CD8-positive, alpha-beta T cell (primary cell): ENCODE measurements at regions of chr4 and their contacts with region 1.

Region 1: GRCh38 chr4:15001869-15002658 is at the start of gene CPEB2:
- DNase-seq: peak; percentile 84 to 97 (median 91)
- ATAC-seq: peak; percentile 70
- H3K4me3 ChIP-seq: peak within 1 kb of the TSS; percentile 77 to 97
- H3K4me3 Mint-ChIP-seq: peak within 1 kb of the TSS; percentile 93
- H3K27ac ChIP-seq: peak within 1 kb of the TSS; percentile 100
- H3K27ac Mint-ChIP-seq: peak within 1 kb of the TSS; percentile 98
- H3K4me1 ChIP-seq: peaks cover 11% of the 10 kb centered on the region
- H3K4me1 Mint-ChIP-seq: peaks cover 26% of the 10 kb centered on the region
- H3K27me3 ChIP-seq: no peaks in the 10 kb centered on the region
- H3K27me3 Mint-ChIP-seq: no peaks in the 10 kb centered on the region
- CTCF ChIP-seq: no peak
- total RNA-seq, gene CPEB2: 17.7 to 21.8 TPM

Region 2: DNA sequence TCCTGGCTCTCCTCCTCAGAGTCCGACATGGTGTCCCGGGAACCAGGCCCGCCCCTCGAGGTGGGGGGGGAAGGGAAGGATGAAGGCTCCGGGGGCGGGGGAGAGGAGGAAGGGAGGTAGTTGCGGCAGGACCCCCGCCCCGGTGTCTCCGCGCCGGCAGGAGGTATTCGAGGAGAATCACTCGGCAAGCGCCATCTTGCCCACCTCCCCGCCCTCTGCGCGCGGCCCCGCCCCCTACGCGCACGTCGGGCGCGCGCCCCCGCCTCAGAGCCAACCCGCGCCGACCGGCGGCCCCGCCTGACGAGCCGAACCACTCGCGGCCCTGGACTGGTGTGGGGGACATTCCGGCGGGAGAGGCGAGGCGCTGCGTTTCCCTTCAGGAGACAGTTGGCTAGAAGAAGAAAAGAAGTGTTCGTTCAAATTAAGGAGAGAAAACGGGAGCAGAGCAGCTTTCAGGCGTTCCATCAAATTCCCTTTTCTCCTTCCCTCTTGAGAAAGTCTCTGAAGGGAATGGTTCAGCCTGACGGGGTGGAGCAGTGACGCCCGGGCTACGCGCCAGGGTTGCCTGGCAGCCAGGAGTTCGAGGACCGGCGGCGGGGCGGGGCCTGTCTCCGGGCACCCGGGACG is 1517.8 kb before region 1 on chr4 and contains the start of gene RAB28:
- CTCF ChIA-PET with region 1: no interaction called
- POLR2A ChIA-PET with region 1: no interaction called
- intact Hi-C with region 1: loop called (anchors 1 to 2 kb)
- DNase-seq: peak; percentile 86 to 96 (median 93)
- ATAC-seq: peak; percentile 88
- H3K4me3 ChIP-seq: peak within 1 kb of the TSS; percentile 84 to 96
- H3K4me3 Mint-ChIP-seq: peak within 1 kb of the TSS; percentile 84
- H3K27ac ChIP-seq: peak within 1 kb of the TSS; percentile 99
- H3K27ac Mint-ChIP-seq: peak within 1 kb of the TSS; percentile 100
- H3K4me1 ChIP-seq: peaks cover 15% of the 10 kb centered on the region
- H3K4me1 Mint-ChIP-seq: peaks cover 26% of the 10 kb centered on the region
- H3K27me3 ChIP-seq: no peaks in the 10 kb centered on the region
- H3K27me3 Mint-ChIP-seq: peaks cover 15% of the 10 kb centered on the region
- CTCF ChIP-seq: no peak
- total RNA-seq, gene RAB28: 4.2 to 4.6 TPM

Region 3: DNA sequence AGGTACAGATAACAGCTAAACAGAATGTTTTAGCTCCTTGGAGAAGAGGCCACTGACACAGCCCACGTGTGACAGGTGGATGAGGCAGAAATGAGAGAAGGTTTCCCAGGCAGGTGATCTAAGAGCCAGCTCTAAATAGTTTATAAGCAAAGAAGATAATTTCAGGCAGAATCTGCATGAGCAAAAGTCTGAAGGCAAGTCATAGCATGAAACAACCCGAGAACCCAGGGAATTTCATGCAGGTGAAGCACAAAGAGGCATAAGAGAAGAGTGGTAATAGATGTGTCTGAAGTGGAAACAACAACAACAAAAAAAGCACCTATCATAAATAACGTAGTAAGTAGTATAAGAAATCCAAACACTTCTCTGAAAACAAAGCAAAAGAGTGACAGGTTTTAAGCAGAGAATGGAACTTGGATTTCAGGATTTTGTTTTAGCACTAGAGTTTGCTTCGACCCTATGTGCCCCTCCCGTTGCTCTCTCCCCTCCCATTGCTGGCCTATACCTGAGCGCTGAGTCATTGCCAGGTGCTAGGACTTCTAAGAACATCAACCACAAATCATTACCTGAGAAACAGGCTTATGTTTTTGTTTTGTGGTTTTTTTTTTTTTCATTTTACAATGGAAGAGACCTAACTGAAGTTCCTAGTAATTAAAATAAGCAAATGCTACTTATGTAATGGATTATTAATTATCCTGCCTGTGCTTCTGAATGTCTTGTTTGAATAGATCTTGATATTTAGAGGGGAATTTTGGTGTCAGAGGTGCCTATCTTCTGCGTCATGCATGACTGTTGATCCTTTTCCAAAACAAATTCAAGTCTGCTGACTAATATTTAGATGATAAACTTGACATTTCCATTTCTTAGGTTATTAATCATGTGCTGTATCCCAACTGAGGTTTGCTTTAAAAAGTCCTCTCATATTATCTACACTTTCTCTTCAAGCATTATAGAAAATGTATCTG is 275.3 kb before region 1 on chr4:
- CTCF ChIA-PET with region 1: no interaction called
- POLR2A ChIA-PET with region 1: no interaction called
- intact Hi-C with region 1: no loop called
- DNase-seq: no peak
- ATAC-seq: no peak
- H3K4me3 ChIP-seq: no peak overlapping the region
- H3K4me3 Mint-ChIP-seq: no peak overlapping the region
- H3K27ac ChIP-seq: no peak overlapping the region
- H3K27ac Mint-ChIP-seq: no peak overlapping the region
- H3K4me1 ChIP-seq: no peaks in the 10 kb centered on the region
- H3K4me1 Mint-ChIP-seq: no peaks in the 10 kb centered on the region
- H3K27me3 ChIP-seq: no peaks in the 10 kb centered on the region
- H3K27me3 Mint-ChIP-seq: no peaks in the 10 kb centered on the region
- CTCF ChIP-seq: no peak

Region 4: DNA sequence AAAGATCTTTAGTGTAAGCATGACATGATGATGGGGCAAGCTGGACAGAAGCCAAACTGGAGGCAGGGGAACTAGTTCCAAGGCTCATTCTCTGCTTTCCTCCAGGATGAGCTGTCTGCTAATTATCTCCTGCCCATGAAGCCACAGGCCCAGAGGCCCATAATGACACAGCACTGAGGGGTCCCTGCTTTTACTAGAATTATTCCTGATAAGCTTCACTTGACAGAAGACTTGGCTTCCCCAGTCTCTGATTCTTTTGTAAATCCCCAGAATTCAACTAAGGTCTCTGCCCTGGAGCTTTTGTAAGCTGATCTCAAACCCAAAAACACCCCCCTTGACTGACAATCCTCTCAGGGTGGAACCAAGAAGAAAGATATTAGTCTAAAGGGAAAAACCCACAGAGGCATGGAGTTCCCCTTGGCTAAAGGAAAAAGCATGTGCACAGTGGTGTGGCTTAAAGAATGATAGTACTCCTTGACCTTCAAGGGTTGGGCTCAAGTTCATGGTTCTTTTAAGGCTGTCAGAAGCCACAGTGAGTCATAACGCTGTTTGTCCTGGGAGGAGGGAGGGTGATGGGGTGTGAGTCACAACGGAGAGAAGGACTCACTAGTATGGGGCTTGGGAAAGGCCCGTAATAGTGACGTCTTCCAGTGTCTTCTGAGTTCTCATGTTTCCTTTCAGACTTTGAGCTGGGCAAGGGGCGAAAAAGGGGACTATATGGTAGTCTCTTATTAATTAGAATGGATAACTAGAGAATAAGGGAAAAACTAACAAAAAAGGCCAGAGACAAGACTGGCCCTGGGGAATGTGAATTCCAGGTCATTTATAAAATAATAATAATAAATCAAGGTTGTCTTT is 145.8 kb before region 1 on chr4:
- CTCF ChIA-PET with region 1: no interaction called
- POLR2A ChIA-PET with region 1: no interaction called
- intact Hi-C with region 1: no loop called
- DNase-seq: peak in 2 of 9 experiments; percentile 9 to 41
- ATAC-seq: no peak
- H3K4me3 ChIP-seq: no peak overlapping the region
- H3K4me3 Mint-ChIP-seq: no peak overlapping the region
- H3K27ac ChIP-seq: no peak overlapping the region
- H3K27ac Mint-ChIP-seq: no peak overlapping the region
- H3K4me1 ChIP-seq: no peaks in the 10 kb centered on the region
- H3K4me1 Mint-ChIP-seq: no peaks in the 10 kb centered on the region
- H3K27me3 ChIP-seq: no peaks in the 10 kb centered on the region
- H3K27me3 Mint-ChIP-seq: peaks cover 32% of the 10 kb centered on the region
- CTCF ChIP-seq: no peak

Region 5: GRCh38 chr4:14871676-14872430 is 130.2 kb before region 1 on chr4:
- CTCF ChIA-PET with region 1: no interaction called
- POLR2A ChIA-PET with region 1: no interaction called
- intact Hi-C with region 1: loop called (anchors 2 to 5 kb)
- DNase-seq: peak in 5 of 9 experiments; percentile 27 to 44 (median 37)
- ATAC-seq: no peak
- H3K4me3 ChIP-seq: no peak overlapping the region
- H3K4me3 Mint-ChIP-seq: no peak overlapping the region
- H3K27ac ChIP-seq: no peak overlapping the region
- H3K27ac Mint-ChIP-seq: no peak overlapping the region
- H3K4me1 ChIP-seq: peaks cover 5% of the 10 kb centered on the region
- H3K4me1 Mint-ChIP-seq: peaks cover 12% of the 10 kb centered on the region
- H3K27me3 ChIP-seq: no peaks in the 10 kb centered on the region
- H3K27me3 Mint-ChIP-seq: peaks cover 16% of the 10 kb centered on the region
- CTCF ChIP-seq: no peak

Region 6: GRCh38 chr4:14990484-14990883 is 11.6 kb before region 1 on chr4:
- CTCF ChIA-PET with region 1: interaction called, 7 read pairs
- POLR2A ChIA-PET with region 1: interaction called, 3 read pairs
- intact Hi-C with region 1: loop called in 1 of 2 experiments (anchors 2 kb)
- DNase-seq: no peak
- ATAC-seq: no peak
- H3K4me3 ChIP-seq: no peak overlapping the region
- H3K4me3 Mint-ChIP-seq: no peak overlapping the region
- H3K27ac ChIP-seq: no peak overlapping the region
- H3K27ac Mint-ChIP-seq: no peak overlapping the region
- H3K4me1 ChIP-seq: no peaks in the 10 kb centered on the region
- H3K4me1 Mint-ChIP-seq: no peaks in the 10 kb centered on the region
- H3K27me3 ChIP-seq: no peaks in the 10 kb centered on the region
- H3K27me3 Mint-ChIP-seq: peaks cover 10% of the 10 kb centered on the region
- CTCF ChIP-seq: no peak

Region 7: DNA sequence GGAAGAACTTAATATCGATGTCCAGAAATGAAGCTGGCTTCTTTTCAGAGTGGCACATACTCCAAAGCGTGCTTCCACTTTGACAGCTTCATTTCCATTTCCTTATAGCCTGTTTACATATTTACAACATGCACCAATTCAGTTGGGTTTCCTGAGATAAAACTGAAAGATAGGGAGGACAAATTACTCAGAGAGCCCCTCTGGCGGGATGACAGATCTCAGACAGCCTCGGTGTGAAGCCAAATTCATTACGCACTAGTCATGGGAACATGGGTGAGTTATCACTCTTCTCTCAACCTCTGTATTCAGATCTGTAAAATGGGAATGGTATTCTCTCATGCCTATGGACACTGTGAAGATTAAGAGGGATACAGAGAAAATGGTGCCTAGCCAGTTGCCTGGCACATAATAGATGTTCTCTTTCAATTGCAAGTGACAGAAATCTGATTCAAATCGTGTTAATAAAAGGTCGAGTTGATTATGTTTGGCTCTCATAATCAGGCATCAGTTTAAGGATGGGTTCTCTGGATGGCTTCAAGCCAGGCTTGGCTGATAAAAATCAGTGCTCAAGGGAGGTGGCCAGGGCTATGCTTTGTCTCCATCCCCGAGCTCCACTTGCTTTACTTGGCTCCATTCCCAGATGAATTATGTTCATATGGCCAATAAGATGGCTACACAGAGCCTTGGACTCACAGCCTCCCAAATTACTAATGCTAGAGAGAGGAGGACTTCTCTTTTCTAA is 293.5 kb after region 1 on chr4:
- CTCF ChIA-PET with region 1: no interaction called
- POLR2A ChIA-PET with region 1: no interaction called
- intact Hi-C with region 1: no loop called
- DNase-seq: no peak
- ATAC-seq: no peak
- H3K4me3 ChIP-seq: no peak overlapping the region
- H3K4me3 Mint-ChIP-seq: no peak overlapping the region
- H3K27ac ChIP-seq: no peak overlapping the region
- H3K27ac Mint-ChIP-seq: no peak overlapping the region
- H3K4me1 ChIP-seq: no peaks in the 10 kb centered on the region
- H3K4me1 Mint-ChIP-seq: no peaks in the 10 kb centered on the region
- H3K27me3 ChIP-seq: no peaks in the 10 kb centered on the region
- H3K27me3 Mint-ChIP-seq: no peaks in the 10 kb centered on the region
- CTCF ChIP-seq: no peak

Region 8: DNA sequence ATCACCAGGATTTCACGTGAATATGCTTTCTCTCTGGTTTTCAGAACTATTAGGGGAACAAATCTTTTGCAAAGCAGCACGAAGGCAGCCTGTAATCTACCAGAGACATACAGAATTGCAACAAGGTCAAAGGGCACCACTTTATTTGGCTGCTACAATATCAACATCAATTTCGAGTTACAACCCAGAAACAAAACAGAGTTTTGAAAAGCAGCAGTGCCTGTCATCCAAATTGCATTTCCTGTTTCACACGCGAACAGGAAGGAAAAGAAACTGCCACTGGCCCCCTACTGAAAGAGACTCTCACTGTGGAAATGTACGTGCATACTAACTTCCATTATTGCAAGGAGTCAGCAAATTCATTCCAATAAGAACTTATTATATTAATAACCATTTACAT is 408.7 kb after region 1 on chr4:
- CTCF ChIA-PET with region 1: no interaction called
- POLR2A ChIA-PET with region 1: no interaction called
- intact Hi-C with region 1: loop called in 1 of 2 experiments (anchors 5 kb)
- DNase-seq: peak in 5 of 9 experiments; percentile 6 to 59 (median 28)
- ATAC-seq: peak; percentile 62
- H3K4me3 ChIP-seq: peak overlapping the region in 1 of 2 experiments; percentile 55
- H3K4me3 Mint-ChIP-seq: peak overlapping the region; percentile 79
- H3K27ac ChIP-seq: peak overlapping the region; percentile 42 to 56
- H3K27ac Mint-ChIP-seq: peak overlapping the region; percentile 90
- H3K4me1 ChIP-seq: peaks cover 42% of the 10 kb centered on the region
- H3K4me1 Mint-ChIP-seq: peaks cover 51% of the 10 kb centered on the region
- H3K27me3 ChIP-seq: no peaks in the 10 kb centered on the region
- H3K27me3 Mint-ChIP-seq: no peaks in the 10 kb centered on the region
- CTCF ChIP-seq: no peak

Region 9: GRCh38 chr4:15681207-15682015 is 679.3 kb after region 1 on chr4 and contains the start of gene FAM200B:
- CTCF ChIA-PET with region 1: no interaction called
- POLR2A ChIA-PET with region 1: interaction called, 8 read pairs
- intact Hi-C with region 1: loop called in 1 of 2 experiments (anchors 1 kb)
- DNase-seq: peak; percentile 92 to 98 (median 95)
- ATAC-seq: peak; percentile 96
- H3K4me3 ChIP-seq: peak within 1 kb of the TSS; percentile 82 to 87
- H3K4me3 Mint-ChIP-seq: peak within 1 kb of the TSS; percentile 93
- H3K27ac ChIP-seq: peak within 1 kb of the TSS; percentile 80 to 85
- H3K27ac Mint-ChIP-seq: peak within 1 kb of the TSS; percentile 97
- H3K4me1 ChIP-seq: peaks cover 18% of the 10 kb centered on the region
- H3K4me1 Mint-ChIP-seq: peaks cover 38% of the 10 kb centered on the region
- H3K27me3 ChIP-seq: no peaks in the 10 kb centered on the region
- H3K27me3 Mint-ChIP-seq: no peaks in the 10 kb centered on the region
- CTCF ChIP-seq: no peak
- total RNA-seq, gene FAM200B: 14.8 to 17.1 TPM

Region 10: GRCh38 chr4:15963001-15963451 is 961.0 kb after region 1 on chr4 and contains the start of gene FGFBP2:
- CTCF ChIA-PET with region 1: no interaction called
- POLR2A ChIA-PET with region 1: no interaction called
- intact Hi-C with region 1: loop called in 1 of 2 experiments (anchors 2 kb)
- DNase-seq: peak; percentile 47 to 91 (median 74)
- ATAC-seq: peak; percentile 84
- H3K4me3 ChIP-seq: peak within 1 kb of the TSS; percentile 26 to 60
- H3K4me3 Mint-ChIP-seq: peak within 1 kb of the TSS; percentile 59
- H3K27ac ChIP-seq: peak within 1 kb of the TSS; percentile 56 to 73
- H3K27ac Mint-ChIP-seq: peak within 1 kb of the TSS; percentile 83
- H3K4me1 ChIP-seq: peaks cover 27% of the 10 kb centered on the region
- H3K4me1 Mint-ChIP-seq: peaks cover 36% of the 10 kb centered on the region
- H3K27me3 ChIP-seq: no peaks in the 10 kb centered on the region
- H3K27me3 Mint-ChIP-seq: no peaks in the 10 kb centered on the region
- CTCF ChIP-seq: peak; percentile 38
- total RNA-seq, gene FGFBP2: 8.2 to 9.9 TPM